HCT116 (cell line): ENCODE measurements at regions of chr9 and their contacts with region 1.

Region 1: DNA sequence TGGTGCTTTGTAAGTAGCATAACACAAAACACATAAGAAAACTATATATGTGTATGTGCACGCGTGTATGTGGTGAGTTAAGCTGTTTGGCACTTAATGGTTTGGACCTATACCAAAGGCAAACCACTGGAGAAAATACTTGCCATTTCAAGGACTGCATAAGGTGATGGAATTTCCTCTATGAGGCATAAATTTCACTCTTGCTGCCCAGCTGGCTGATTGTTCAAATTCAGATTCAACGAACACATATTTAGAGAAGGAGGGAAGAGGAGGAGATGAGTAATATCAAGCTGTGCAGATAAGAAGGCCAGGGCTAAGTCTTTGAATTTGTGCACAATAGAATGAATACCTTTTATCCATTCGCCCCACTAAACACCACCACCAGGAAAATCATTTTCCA is 470.6 kb upstream of the MPDZ start:
- DNase-seq: no peak
- ATAC-seq: no peak
- H3K4me3 ChIP-seq: no peak overlapping the region
- H3K27ac ChIP-seq: no peak overlapping the region
- H3K4me1 ChIP-seq: no peaks in the 10 kb centered on the region
- H3K27me3 ChIP-seq: no peaks in the 10 kb centered on the region
- CTCF ChIP-seq: no peak
- POLR2A ChIP-seq: no peak
- RAD21 ChIP-seq: no peak

Region 2: DNA sequence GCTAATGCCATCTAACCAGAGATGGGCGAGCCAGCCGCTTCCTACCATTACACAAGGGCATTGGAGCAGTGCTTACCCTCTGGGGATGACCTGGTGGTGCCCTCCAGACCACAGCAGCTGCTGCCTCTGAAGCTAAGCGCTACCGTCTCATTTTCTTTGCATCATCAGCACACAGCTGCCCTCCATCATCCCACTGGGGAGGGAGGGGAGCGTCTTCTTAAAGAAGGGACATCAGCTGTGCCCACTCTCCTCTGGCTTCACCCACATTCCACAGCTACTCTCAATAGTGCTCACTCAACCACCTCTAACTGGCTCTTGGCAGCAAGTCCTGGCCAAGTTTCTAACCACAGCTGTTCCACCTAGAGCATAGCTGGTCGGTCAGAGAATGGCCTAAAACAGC is 60.4 kb after region 1 on chr9:
- CTCF ChIA-PET with region 1: no interaction called
- POLR2A ChIA-PET with region 1: no interaction called
- RAD21 ChIA-PET with region 1: no interaction called
- intact Hi-C with region 1: loop called (anchors 10 kb)
- DNase-seq: no peak
- ATAC-seq: no peak
- H3K4me3 ChIP-seq: no peak overlapping the region
- H3K27ac ChIP-seq: no peak overlapping the region
- H3K4me1 ChIP-seq: no peaks in the 10 kb centered on the region
- H3K27me3 ChIP-seq: no peaks in the 10 kb centered on the region
- CTCF ChIP-seq: no peak
- POLR2A ChIP-seq: no peak
- RAD21 ChIP-seq: no peak